ENCODE measurements at regions of chr2 and their contacts with region 1.

Region 1: GRCh38 chr2:202588647-202589581 is 45.9 kb upstream of the FAM117B start:
- DNase-seq: peak; percentile 45
- ATAC-seq: peak; percentile 99
- H3K4me3 Mint-ChIP-seq: peak overlapping the region; percentile 51
- H3K27ac Mint-ChIP-seq: peak overlapping the region; percentile 54
- H3K4me1 Mint-ChIP-seq: peaks cover 19% of the 10 kb centered on the region
- H3K27me3 Mint-ChIP-seq: no peaks in the 10 kb centered on the region
- CTCF ChIP-seq: no peak

Region 2: DNA sequence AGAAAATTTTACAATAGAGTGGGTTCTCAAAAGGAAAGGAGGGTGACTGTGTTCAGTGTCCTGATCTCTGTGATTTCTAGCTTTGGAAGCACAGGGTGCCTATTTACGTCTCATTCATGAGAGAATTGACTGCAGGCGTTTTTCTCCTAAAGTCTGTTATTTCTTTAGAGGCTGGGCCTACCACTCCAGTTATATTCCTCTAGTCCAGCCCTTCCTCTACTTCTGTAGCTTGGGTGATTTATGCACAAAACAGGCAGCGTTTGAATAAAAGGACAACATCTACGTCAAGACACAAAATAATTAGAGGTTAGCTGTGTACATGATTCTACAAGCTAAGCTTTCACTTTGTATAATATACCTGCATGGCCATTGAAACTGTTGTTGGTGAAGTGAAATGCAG is 13.4 kb after region 1 on chr2:
- CTCF ChIA-PET with region 1: interaction called, 15 read pairs
- POLR2A ChIA-PET with region 1: interaction called, 5 read pairs
- intact Hi-C with region 1: no loop called
- DNase-seq: no peak
- ATAC-seq: no peak
- H3K4me3 Mint-ChIP-seq: no peak overlapping the region
- H3K27ac Mint-ChIP-seq: no peak overlapping the region
- H3K4me1 Mint-ChIP-seq: peaks cover 24% of the 10 kb centered on the region
- H3K27me3 Mint-ChIP-seq: no peaks in the 10 kb centered on the region
- CTCF ChIP-seq: no peak

Region 3: GRCh38 chr2:202671317-202672035 is 82.6 kb after region 1 on chr2:
- CTCF ChIA-PET with region 1: interaction called, 6 read pairs
- POLR2A ChIA-PET with region 1: interaction called, 5 read pairs
- intact Hi-C with region 1: loop called (anchors 1 kb)
- DNase-seq: no peak
- ATAC-seq: no peak
- H3K4me3 Mint-ChIP-seq: no peak overlapping the region
- H3K27ac Mint-ChIP-seq: peak overlapping the region; percentile 87
- H3K4me1 Mint-ChIP-seq: peaks cover 88% of the 10 kb centered on the region
- H3K27me3 Mint-ChIP-seq: no peaks in the 10 kb centered on the region
- CTCF ChIP-seq: no peak

Region 4: GRCh38 chr2:202703091-202703490 is 114.2 kb after region 1 on chr2:
- CTCF ChIA-PET with region 1: interaction called, 31 read pairs
- POLR2A ChIA-PET with region 1: interaction called, 3 read pairs
- intact Hi-C with region 1: loop called (anchors 1 kb)
- DNase-seq: no peak
- ATAC-seq: no peak
- H3K4me3 Mint-ChIP-seq: no peak overlapping the region
- H3K27ac Mint-ChIP-seq: peak overlapping the region; percentile 60
- H3K4me1 Mint-ChIP-seq: peaks cover 58% of the 10 kb centered on the region
- H3K27me3 Mint-ChIP-seq: no peaks in the 10 kb centered on the region
- CTCF ChIP-seq: no peak

Region 5: GRCh38 chr2:202750763-202751427 is 162.0 kb after region 1 on chr2:
- CTCF ChIA-PET with region 1: interaction called, 4 read pairs
- POLR2A ChIA-PET with region 1: interaction called, 3 read pairs
- intact Hi-C with region 1: loop called (anchors 1 kb)
- DNase-seq: no peak
- ATAC-seq: peak; percentile 85
- H3K4me3 Mint-ChIP-seq: peak overlapping the region; percentile 54
- H3K27ac Mint-ChIP-seq: peak overlapping the region; percentile 92
- H3K4me1 Mint-ChIP-seq: peaks cover 51% of the 10 kb centered on the region
- H3K27me3 Mint-ChIP-seq: no peaks in the 10 kb centered on the region
- CTCF ChIP-seq: no peak

Measured in activated B cell treated with CpG ODN at 0.5 μM for 24 hours (primary cell).